Sigmoid colon (tissue), 7 donors: ENCODE measurements at regions of chr11 and their contacts with region 1.

Region 1: DNA sequence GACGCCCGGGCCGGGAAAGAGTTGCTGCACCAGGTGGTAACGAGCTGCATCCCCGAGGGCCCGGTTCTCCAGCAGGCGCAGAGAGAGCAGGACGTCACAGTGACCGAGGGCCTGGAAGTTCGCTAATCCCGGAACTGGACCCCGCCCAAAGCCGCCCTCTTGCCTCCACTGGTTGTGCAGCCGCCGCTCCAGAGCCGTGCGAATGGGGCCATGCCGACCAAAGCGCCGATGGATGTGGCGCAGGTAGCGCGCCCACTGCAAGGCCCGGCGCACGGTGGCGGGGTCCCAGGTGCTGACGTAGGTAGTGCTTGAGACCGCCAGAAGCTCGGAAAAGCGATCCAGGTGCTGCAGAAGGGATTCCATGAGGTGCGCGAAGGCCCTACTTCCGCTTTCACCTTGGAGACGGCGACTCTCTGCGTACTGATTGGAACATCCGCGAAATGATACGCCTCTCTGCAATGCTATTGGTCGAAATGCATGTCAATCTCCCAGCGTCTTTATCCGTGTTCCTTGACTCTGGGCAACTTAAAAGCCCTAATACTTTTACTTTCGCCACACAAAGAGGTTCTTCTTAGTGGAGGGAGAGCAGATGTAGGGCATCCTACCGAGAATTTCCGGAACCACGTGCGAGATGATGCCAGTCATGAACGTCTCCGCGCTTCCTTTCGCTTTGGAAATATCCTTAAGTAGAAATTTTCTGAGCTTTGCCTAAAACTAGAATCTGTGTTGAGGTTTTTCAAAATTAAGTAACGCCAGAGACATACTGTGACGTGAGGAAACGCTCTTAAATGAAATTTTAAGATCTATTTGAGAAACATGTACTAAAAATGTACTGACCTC is at the start of gene FANCF:
- DNase-seq: peak; percentile 97
- H3K4me3 ChIP-seq: peak within 1 kb of the TSS; percentile 78 to 88 (median 80)
- H3K27ac ChIP-seq: peak within 1 kb of the TSS; percentile 82 to 91 (median 88)
- H3K4me1 ChIP-seq: peaks cover 0 to 19% (median 9%) of the 10 kb centered on the region in 4 donors
- H3K27me3 ChIP-seq: no peaks in the 10 kb centered on the region
- CTCF ChIP-seq: no peak
- EP300 ChIP-seq: no peak
- POLR2A ChIP-seq: no peak
- total RNA-seq, gene FANCF: 3.6 to 4.6 (median 4.5) TPM

Region 2: GRCh38 chr11:22829231-22830081 is 203.8 kb after region 1 on chr11 and contains the start of gene SVIP:
- intact Hi-C with region 1: loop called (anchors 5 kb)
- DNase-seq: peak; percentile 96
- H3K4me3 ChIP-seq: peak within 1 kb of the TSS; percentile 89 to 96 (median 92)
- H3K27ac ChIP-seq: peak within 1 kb of the TSS; percentile 78 to 89 (median 82)
- H3K4me1 ChIP-seq: peaks cover 0 to 13% (median 3%) of the 10 kb centered on the region in 4 donors
- H3K27me3 ChIP-seq: no peaks in the 10 kb centered on the region
- CTCF ChIP-seq: peak in 2 of 4 experiments; percentile 6 to 58
- EP300 ChIP-seq: no peak
- POLR2A ChIP-seq: peak; percentile 47 to 58
- total RNA-seq, gene SVIP: 6.9 to 16.8 (median 12.0) TPM